ENCODE measurements at regions of chr9 and their contacts with region 1.

Region 1: GRCh38 chr9:33233681-33234473 is 6.1 kb upstream of the SPINK4 start:
- DNase-seq: peak; percentile 100
- H3K4me3 Mint-ChIP-seq: peak overlapping the region; percentile 2
- H3K27ac Mint-ChIP-seq: peak overlapping the region; percentile 97
- H3K4me1 Mint-ChIP-seq: peaks cover 71% of the 10 kb centered on the region
- H3K27me3 Mint-ChIP-seq: no peaks in the 10 kb centered on the region
- CTCF ChIP-seq: no peak

Region 2: GRCh38 chr9:33024966-33025571 is 208.8 kb before region 1 on chr9 and contains the start of gene DNAJA1:
- CTCF ChIA-PET with region 1: interaction called, 3 read pairs
- POLR2A ChIA-PET with region 1: interaction called, 10 read pairs
- intact Hi-C with region 1: no loop called
- DNase-seq: peak; percentile 93
- H3K4me3 Mint-ChIP-seq: peak within 1 kb of the TSS; percentile 93
- H3K27ac Mint-ChIP-seq: peak within 1 kb of the TSS; percentile 94
- H3K4me1 Mint-ChIP-seq: peaks cover 41% of the 10 kb centered on the region
- H3K27me3 Mint-ChIP-seq: no peaks in the 10 kb centered on the region
- CTCF ChIP-seq: no peak
- total RNA-seq, gene DNAJA1: 58.2 and 82.7 TPM in 2 replicates

Region 3: DNA sequence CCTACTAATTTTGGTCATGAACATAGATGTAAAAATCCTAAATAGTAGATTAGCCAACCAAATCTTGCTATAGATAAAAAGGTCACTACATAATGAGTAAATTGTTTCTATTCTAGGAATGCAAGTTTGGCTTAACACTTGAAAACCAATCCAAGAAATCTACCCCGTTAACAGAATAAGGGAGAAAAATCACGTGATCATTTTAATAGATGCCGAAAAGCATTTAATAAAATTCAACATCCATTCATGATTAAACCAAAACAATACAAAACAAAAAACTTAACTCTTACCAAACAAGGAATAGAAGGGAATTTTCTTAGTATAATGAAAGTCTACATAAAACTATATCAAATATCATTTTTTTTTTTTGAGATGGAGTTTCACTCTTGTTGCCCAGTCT is 136.7 kb before region 1 on chr9:
- CTCF ChIA-PET with region 1: no interaction called
- POLR2A ChIA-PET with region 1: no interaction called
- intact Hi-C with region 1: no loop called
- DNase-seq: no peak
- H3K4me3 Mint-ChIP-seq: no peak overlapping the region
- H3K27ac Mint-ChIP-seq: no peak overlapping the region
- H3K4me1 Mint-ChIP-seq: peaks cover 11% of the 10 kb centered on the region
- H3K27me3 Mint-ChIP-seq: no peaks in the 10 kb centered on the region
- CTCF ChIP-seq: no peak

Region 4: GRCh38 chr9:33249087-33249657 is 15.3 kb after region 1 on chr9:
- CTCF ChIA-PET with region 1: interaction called, 18 read pairs
- POLR2A ChIA-PET with region 1: interaction called, 259 read pairs
- intact Hi-C with region 1: no loop called
- DNase-seq: no peak
- H3K4me3 Mint-ChIP-seq: no peak overlapping the region
- H3K27ac Mint-ChIP-seq: peak overlapping the region; percentile 80
- H3K4me1 Mint-ChIP-seq: peaks cover 30% of the 10 kb centered on the region
- H3K27me3 Mint-ChIP-seq: no peaks in the 10 kb centered on the region
- CTCF ChIP-seq: no peak

Region 5: GRCh38 chr9:33264473-33265177 is 30.7 kb after region 1 on chr9 and contains the starts of genes BAG1 and CHMP5:
- CTCF ChIA-PET with region 1: interaction called, 30 read pairs
- POLR2A ChIA-PET with region 1: interaction called, 387 read pairs
- intact Hi-C with region 1: loop called (anchors 1 kb)
- DNase-seq: peak; percentile 99
- H3K4me3 Mint-ChIP-seq: peak within 1 kb of the TSS; percentile 99
- H3K27ac Mint-ChIP-seq: peak within 1 kb of the TSS; percentile 95
- H3K4me1 Mint-ChIP-seq: peaks cover 33% of the 10 kb centered on the region
- H3K27me3 Mint-ChIP-seq: no peaks in the 10 kb centered on the region
- CTCF ChIP-seq: no peak
- total RNA-seq, gene BAG1: 75.7 and 91.8 TPM in 2 replicates
- total RNA-seq, gene CHMP5: 67.6 and 85.1 TPM in 2 replicates

Region 6: DNA sequence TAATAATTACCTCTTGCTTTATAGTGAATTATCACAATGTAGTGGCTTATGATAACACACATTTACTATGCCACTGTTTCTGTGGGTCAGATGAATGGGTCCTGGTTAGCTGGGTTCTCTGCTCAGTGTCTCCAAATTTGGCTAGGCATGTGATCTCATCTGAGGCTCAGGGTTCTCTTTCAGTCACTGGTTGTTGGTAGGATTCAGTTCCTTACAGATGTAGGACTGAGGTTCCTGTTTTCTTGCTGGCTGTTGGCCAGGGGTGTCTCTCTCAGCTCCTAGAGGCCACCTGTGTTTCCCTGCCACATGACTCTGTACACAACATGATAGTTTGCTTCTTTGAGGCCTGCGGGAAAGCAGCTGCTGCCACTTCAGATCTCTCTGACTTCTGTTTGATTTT is 63.6 kb after region 1 on chr9:
- CTCF ChIA-PET with region 1: interaction called, 10 read pairs
- POLR2A ChIA-PET with region 1: interaction called, 4 read pairs
- intact Hi-C with region 1: no loop called
- DNase-seq: peak; percentile 5
- H3K4me3 Mint-ChIP-seq: peak overlapping the region; percentile 19
- H3K27ac Mint-ChIP-seq: peak overlapping the region; percentile 59
- H3K4me1 Mint-ChIP-seq: peaks cover 49% of the 10 kb centered on the region
- H3K27me3 Mint-ChIP-seq: no peaks in the 10 kb centered on the region
- CTCF ChIP-seq: no peak

Region 7: GRCh38 chr9:33320568-33321261 is 86.8 kb after region 1 on chr9:
- CTCF ChIA-PET with region 1: interaction called, 5 read pairs
- POLR2A ChIA-PET with region 1: interaction called, 11 read pairs
- intact Hi-C with region 1: no loop called
- DNase-seq: peak; percentile 92
- H3K4me3 Mint-ChIP-seq: peak overlapping the region; percentile 20
- H3K27ac Mint-ChIP-seq: peak overlapping the region; percentile 70
- H3K4me1 Mint-ChIP-seq: peaks cover 18% of the 10 kb centered on the region
- H3K27me3 Mint-ChIP-seq: no peaks in the 10 kb centered on the region
- CTCF ChIP-seq: no peak